GM12878 (cell line): ENCODE measurements at regions of chr14 and their contacts with region 1.

Region 1: DNA sequence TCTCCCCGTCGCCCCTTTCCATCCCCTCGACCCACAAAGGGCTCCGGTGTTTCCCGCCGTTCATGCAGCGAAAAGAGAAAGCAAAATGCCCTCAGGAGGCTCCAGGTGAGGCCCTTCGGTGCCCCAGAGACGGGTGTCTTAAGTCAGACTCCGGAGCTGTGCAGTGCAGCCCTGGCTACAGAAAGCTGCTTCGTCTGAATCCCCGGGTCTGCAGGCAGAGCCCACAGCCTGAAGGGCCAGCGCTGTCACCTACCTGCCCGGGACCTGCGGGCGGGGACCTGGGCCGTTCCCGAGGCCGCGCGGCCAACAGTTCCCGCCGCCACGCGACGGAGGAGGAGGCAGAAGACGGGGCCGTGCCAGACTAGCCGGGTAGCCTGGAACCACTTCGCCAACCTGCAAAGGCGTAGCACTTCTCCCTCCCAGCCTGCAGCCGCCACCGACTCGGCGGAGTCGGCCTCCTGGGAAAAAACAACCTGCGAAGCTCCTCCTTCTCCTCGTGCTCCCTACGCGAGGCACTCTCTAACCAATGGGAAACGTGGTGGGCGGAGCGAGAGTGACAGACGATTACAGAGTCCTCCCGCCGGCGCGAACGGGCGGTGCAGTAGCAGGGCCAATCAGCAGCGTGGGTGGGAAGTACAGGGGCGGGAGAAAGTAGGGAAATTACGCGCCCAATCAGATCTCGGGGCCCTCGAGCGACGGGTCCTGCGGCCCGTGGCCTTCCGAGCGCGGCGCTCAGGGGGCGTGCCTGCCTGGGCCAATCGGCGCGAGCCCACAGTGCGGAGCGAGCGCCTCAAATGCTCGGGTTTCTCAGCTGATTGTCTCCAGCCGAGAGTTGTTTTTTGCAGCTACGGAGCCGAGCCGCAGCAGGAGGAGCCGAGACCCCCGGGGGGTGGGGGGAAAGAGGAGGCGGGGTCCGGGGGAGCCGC is at the starts of genes GPR137C and TXNDC16:
- DNase-seq: peak; percentile 99
- ATAC-seq: peak; percentile 97
- H3K4me3 ChIP-seq: peak within 1 kb of the TSS; percentile 93
- H3K27ac ChIP-seq: peak within 1 kb of the TSS; percentile 73
- H3K4me1 ChIP-seq: peaks cover 8% of the 10 kb centered on the region
- H3K27me3 ChIP-seq: peaks cover 0 to 2% of the 10 kb centered on the region in 2 experiments; a peak in 3 of 4 replicates
- CTCF ChIP-seq: no peak
- EP300 ChIP-seq: 0 out of 4 replicates have a peak, but pooled peaks of 1 of the 2 experiments have one; percentile 21
- POLR2A ChIP-seq: peak; percentile 97
- RAD21 ChIP-seq: no peak
- polyA plus RNA-seq, gene GPR137C: 0.03 to 0.05 TPM
- polyA plus RNA-seq, gene TXNDC16: 1.2 to 1.6 TPM

Region 2: GRCh38 chr14:52402812-52403526 is 149.4 kb before region 1 on chr14:
- CTCF ChIA-PET with region 1: no interaction called
- POLR2A ChIA-PET with region 1: no interaction called
- RAD21 ChIA-PET with region 1: no interaction called
- SMC1A ChIA-PET with region 1: no interaction called
- in situ Hi-C with region 1: no loop called
- intact Hi-C with region 1: no loop called
- DNase-seq: peak; percentile 21
- ATAC-seq: peak; percentile 74
- H3K4me3 ChIP-seq: no peak overlapping the region
- H3K27ac ChIP-seq: no peak overlapping the region
- H3K4me1 ChIP-seq: no peaks in the 10 kb centered on the region
- H3K27me3 ChIP-seq: peaks cover 0 to 3% of the 10 kb centered on the region in 2 experiments; a peak in 2 of 4 replicates
- CTCF ChIP-seq: no peak
- EP300 ChIP-seq: no peak
- POLR2A ChIP-seq: no peak
- RAD21 ChIP-seq: no peak

Region 3: DNA sequence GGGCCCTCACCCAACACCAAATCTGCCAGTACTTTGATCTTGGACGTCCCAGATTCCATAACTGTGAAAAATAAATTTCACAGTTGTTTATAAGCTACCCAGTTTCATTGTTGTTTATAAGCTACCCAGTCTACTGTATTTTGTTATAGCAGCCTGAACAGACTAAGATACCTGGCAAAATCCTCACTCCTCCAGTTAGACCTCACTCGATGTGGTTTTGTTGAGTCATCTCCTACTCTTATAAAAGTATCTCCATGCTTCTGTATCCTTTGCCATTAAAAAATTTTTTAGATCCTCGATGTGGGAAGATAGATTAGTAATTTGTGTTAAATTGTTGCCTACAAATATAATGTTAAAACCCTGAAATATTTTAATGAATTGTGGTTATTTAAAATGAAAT is 16.1 kb before region 1 on chr14:
- CTCF ChIA-PET with region 1: interaction called, 4 read pairs
- POLR2A ChIA-PET with region 1: interaction called, 11 read pairs
- RAD21 ChIA-PET with region 1: no interaction called
- SMC1A ChIA-PET with region 1: interaction called, 10 read pairs
- in situ Hi-C with region 1: no loop called
- intact Hi-C with region 1: no loop called
- DNase-seq: no peak
- ATAC-seq: no peak
- H3K4me3 ChIP-seq: no peak overlapping the region
- H3K27ac ChIP-seq: no peak overlapping the region
- H3K4me1 ChIP-seq: no peaks in the 10 kb centered on the region
- H3K27me3 ChIP-seq: no peaks in the 10 kb centered on the region
- CTCF ChIP-seq: no peak
- EP300 ChIP-seq: no peak
- POLR2A ChIP-seq: no peak
- RAD21 ChIP-seq: no peak

Region 4: GRCh38 chr14:52695481-52696091 is 143.3 kb after region 1 on chr14 and contains the start of gene ERO1A:
- CTCF ChIA-PET with region 1: no interaction called
- POLR2A ChIA-PET with region 1: interaction called, 6 read pairs
- RAD21 ChIA-PET with region 1: no interaction called
- SMC1A ChIA-PET with region 1: interaction called, 3 read pairs
- in situ Hi-C with region 1: no loop called
- intact Hi-C with region 1: loop called (anchors 10 kb)
- DNase-seq: no peak
- ATAC-seq: peak; percentile 82
- H3K4me3 ChIP-seq: peak within 1 kb of the TSS; percentile 85
- H3K27ac ChIP-seq: peak within 1 kb of the TSS; percentile 80
- H3K4me1 ChIP-seq: peaks cover 7% of the 10 kb centered on the region; the same call in 1 of the 2 replicates
- H3K27me3 ChIP-seq: no peaks in the 10 kb centered on the region
- CTCF ChIP-seq: peak in 1 of 3 experiments; percentile 10; a peak in 1 of 6 replicates
- EP300 ChIP-seq: no peak
- POLR2A ChIP-seq: peak; percentile 73; the same call in 1 of the 2 replicates
- RAD21 ChIP-seq: no peak
- polyA plus RNA-seq, gene ERO1A: 17.5 to 41.2 TPM

Region 5: DNA sequence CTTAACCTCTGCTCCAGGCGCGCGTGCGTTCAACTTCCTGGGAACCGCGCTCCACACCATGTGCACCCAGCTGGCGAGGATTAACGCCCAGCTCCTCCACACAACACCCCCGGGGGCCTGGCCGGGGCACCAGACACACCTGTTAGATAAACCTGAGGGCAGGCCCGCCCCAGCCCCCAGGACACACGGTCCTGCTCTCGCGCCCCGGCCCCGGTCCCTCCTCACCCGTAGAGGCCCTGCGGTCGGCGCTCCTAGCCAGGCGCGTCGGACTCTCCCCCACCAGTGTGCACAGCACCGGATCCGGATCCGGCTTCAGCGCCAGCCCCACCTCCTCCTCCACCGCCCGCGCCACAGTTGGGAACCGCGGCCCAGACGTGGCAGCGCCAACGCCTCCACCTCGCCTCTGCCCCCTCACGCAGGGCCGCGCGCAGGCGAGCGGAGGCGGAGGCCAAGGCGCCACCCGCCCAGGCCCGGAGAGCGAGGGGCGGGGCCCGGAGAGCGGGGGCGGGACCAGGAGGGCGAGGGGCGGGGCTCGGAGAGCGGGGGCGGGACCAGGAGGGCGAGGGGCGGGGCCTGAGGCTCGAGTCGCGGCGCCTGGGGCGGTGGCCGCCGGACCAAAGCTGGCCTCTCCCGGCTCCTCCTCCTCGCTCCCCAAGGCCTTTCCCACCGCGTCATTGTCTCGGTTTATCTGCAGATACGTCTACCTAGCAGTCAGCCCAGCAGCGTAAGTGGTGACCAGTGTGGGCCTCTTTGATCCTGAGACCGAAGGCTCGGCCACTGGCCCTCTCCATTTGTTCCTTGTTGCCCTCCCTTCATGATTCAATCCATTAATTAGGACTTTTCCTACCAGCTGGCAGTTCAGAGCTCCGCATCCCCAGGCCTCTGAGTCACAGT is 239.1 kb after region 1 on chr14 and contains the start of gene GNPNAT1:
- CTCF ChIA-PET with region 1: no interaction called
- POLR2A ChIA-PET with region 1: no interaction called
- RAD21 ChIA-PET with region 1: no interaction called
- SMC1A ChIA-PET with region 1: no interaction called
- in situ Hi-C with region 1: no loop called
- intact Hi-C with region 1: loop called (anchors 5 kb)
- DNase-seq: peak; percentile 48
- ATAC-seq: peak; percentile 97
- H3K4me3 ChIP-seq: peak within 1 kb of the TSS; percentile 78
- H3K27ac ChIP-seq: peak within 1 kb of the TSS; percentile 61
- H3K4me1 ChIP-seq: no peaks in the 10 kb centered on the region
- H3K27me3 ChIP-seq: no peaks in the 10 kb centered on the region
- CTCF ChIP-seq: no peak
- EP300 ChIP-seq: no peak
- POLR2A ChIP-seq: peak; percentile 93
- RAD21 ChIP-seq: no peak
- polyA plus RNA-seq, gene GNPNAT1: 23.4 to 29.1 TPM